Dendritic cell treated with granulocyte-macrophage colony-stimulating factor and Interleukin-4, amounts not matched to agents 40 ng/mL and 50 ng/mL, for 4 days (primary cell): ENCODE measurements at regions of chr2 and their contacts with region 1.

Region 1: GRCh38 chr2:155913356-155913755 is 419.2 kb downstream of the NR4A2 start:
- H3K4me3 Mint-ChIP-seq: no peak overlapping the region
- H3K27ac Mint-ChIP-seq: no peak overlapping the region
- H3K4me1 Mint-ChIP-seq: no peaks in the 10 kb centered on the region
- H3K27me3 Mint-ChIP-seq: no peaks in the 10 kb centered on the region

Region 2: GRCh38 chr2:155733091-155733853 is 180.1 kb before region 1 on chr2:
- intact Hi-C with region 1: no loop called
- H3K4me3 Mint-ChIP-seq: no peak overlapping the region
- H3K27ac Mint-ChIP-seq: no peak overlapping the region
- H3K4me1 Mint-ChIP-seq: no peaks in the 10 kb centered on the region
- H3K27me3 Mint-ChIP-seq: no peaks in the 10 kb centered on the region

Region 3: DNA sequence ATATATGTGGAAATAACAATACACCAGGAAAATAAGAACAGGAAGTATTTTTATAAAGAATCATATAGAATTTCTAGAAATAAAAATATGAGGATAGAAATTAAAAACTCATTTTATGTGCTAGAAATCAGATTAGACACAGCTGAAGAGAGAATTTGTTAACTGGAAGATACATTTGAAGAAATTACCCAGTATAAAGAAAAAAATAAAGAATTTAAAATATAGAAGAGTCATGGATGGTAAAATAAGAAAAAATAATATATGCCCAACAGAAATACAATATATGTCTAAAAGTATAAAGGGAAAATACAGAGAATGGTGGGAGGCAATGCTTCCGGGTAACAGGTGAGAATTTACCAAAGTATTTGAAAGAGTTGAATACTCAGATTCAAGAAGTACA is 120.7 kb before region 1 on chr2:
- intact Hi-C with region 1: no loop called
- H3K4me3 Mint-ChIP-seq: no peak overlapping the region
- H3K27ac Mint-ChIP-seq: no peak overlapping the region
- H3K4me1 Mint-ChIP-seq: no peaks in the 10 kb centered on the region
- H3K27me3 Mint-ChIP-seq: no peaks in the 10 kb centered on the region

Region 4: GRCh38 chr2:155902635-155903034 is 10.7 kb before region 1 on chr2:
- intact Hi-C with region 1: loop called (anchors 1 kb)
- H3K4me3 Mint-ChIP-seq: no peak overlapping the region
- H3K27ac Mint-ChIP-seq: no peak overlapping the region
- H3K4me1 Mint-ChIP-seq: no peaks in the 10 kb centered on the region
- H3K27me3 Mint-ChIP-seq: no peaks in the 10 kb centered on the region

Region 5: GRCh38 chr2:156253765-156254164 is 340.4 kb after region 1 on chr2:
- intact Hi-C with region 1: no loop called
- H3K4me3 Mint-ChIP-seq: no peak overlapping the region
- H3K27ac Mint-ChIP-seq: no peak overlapping the region
- H3K4me1 Mint-ChIP-seq: no peaks in the 10 kb centered on the region
- H3K27me3 Mint-ChIP-seq: no peaks in the 10 kb centered on the region